ENCODE measurements at regions of chr7 and their contacts with region 1.

Region 1: GRCh38 chr7:39525926-39526325 is 40.3 kb upstream of the YAE1 start:
- DNase-seq: no peak
- ATAC-seq: no peak
- H3K4me3 ChIP-seq: no peak overlapping the region
- H3K27ac ChIP-seq: no peak overlapping the region
- H3K4me1 ChIP-seq: no peaks in the 10 kb centered on the region
- H3K27me3 ChIP-seq: no peaks in the 10 kb centered on the region
- CTCF ChIP-seq: no peak
- POLR2A ChIP-seq: no peak

Region 2: GRCh38 chr7:38398725-38399321 is 1127.1 kb before region 1 on chr7:
- in situ Hi-C with region 1: loop called in 2 of 4 experiments (anchors 25 kb)
- intact Hi-C with region 1: loop called (anchors 2 kb)
- DNase-seq: no peak
- ATAC-seq: no peak
- H3K4me3 ChIP-seq: no peak overlapping the region
- H3K27ac ChIP-seq: no peak overlapping the region
- H3K4me1 ChIP-seq: peaks cover 0 to 4% of the 10 kb centered on the region in 2 donors
- H3K27me3 ChIP-seq: no peaks in the 10 kb centered on the region
- CTCF ChIP-seq: peak; percentile 28 to 76 (median 54)
- POLR2A ChIP-seq: no peak